ENCODE measurements at regions of chr15 and their contacts with region 1.

Region 1: DNA sequence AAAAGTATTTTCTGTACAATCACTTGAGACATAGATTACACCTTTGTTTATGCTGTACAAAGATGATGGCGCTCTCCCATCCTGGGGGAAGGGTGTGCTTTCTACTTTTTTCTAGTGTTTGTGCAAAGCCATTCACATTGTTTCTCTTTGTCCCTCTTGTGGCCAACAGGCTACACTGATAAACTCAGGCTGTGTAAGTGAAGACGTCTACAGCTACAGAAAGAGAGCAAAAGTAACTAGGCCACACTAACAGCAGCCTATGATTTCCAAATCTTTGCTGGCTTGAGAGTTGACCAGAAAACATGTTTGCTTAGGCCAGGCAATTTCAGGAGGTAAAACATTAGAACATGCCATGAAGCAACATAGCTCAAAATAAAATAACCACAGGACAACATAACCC is 75.1 kb downstream of the FOXB1 start:
- DNase-seq: no peak
- H3K4me3 ChIP-seq: no peak overlapping the region
- H3K27ac ChIP-seq: no peak overlapping the region
- H3K4me1 ChIP-seq: peaks cover 0 to 18% (median 17%) of the 10 kb centered on the region in 4 experiments
- H3K27me3 ChIP-seq: no peaks in the 10 kb centered on the region
- CTCF ChIP-seq: peak in 2 of 3 experiments; percentile 30 to 66; a peak in 2 of 4 replicates
- EP300 ChIP-seq: no peak
- POLR2A ChIP-seq: no peak
- RAD21 ChIP-seq: peak; percentile 48 to 62

Region 2: GRCh38 chr15:60091165-60091564 is 12.0 kb after region 1 on chr15:
- CTCF ChIA-PET with region 1: interaction called, 17 read pairs
- POLR2A ChIA-PET with region 1: interaction called, 3 read pairs
- DNase-seq: no peak
- H3K4me3 ChIP-seq: no peak overlapping the region
- H3K27ac ChIP-seq: no peak overlapping the region
- H3K4me1 ChIP-seq: peaks cover 0 to 6% (median 0%) of the 10 kb centered on the region in 4 experiments; a peak in 1 of 7 replicates
- H3K27me3 ChIP-seq: no peaks in the 10 kb centered on the region; a peak in 1 of 7 replicates
- CTCF ChIP-seq: no peak
- EP300 ChIP-seq: no peak
- POLR2A ChIP-seq: no peak
- RAD21 ChIP-seq: no peak